Activated T-helper 1 cell treated with anti-CD3 and anti-CD28 coated beads, Interleukin-12 subunit alpha, Interleukin-12 subunit beta, Interleukin-2, Interleukin-4 antibody, amounts not matched to agents 30 ng/mL and 10 ng/mL and 1 ng/mL, durations not matched to agents 14 hours and 24 hours and 36 hours (primary cell): ENCODE measurements at regions of chr17 and their contacts with region 1.

Region 1: GRCh38 chr17:17151962-17152361 is 54.2 kb downstream of the PLD6 start:
- DNase-seq: no peak
- H3K4me3 Mint-ChIP-seq: no peak overlapping the region
- H3K27ac Mint-ChIP-seq: peak overlapping the region; percentile 68
- H3K4me1 Mint-ChIP-seq: peaks cover 56% of the 10 kb centered on the region
- H3K27me3 Mint-ChIP-seq: no peaks in the 10 kb centered on the region

Region 2: GRCh38 chr17:17119533-17119932 is 32.4 kb before region 1 on chr17:
- intact Hi-C with region 1: loop called (anchors 1 kb)
- DNase-seq: peak; percentile 50
- H3K4me3 Mint-ChIP-seq: peak overlapping the region; percentile 39
- H3K27ac Mint-ChIP-seq: peak overlapping the region; percentile 92
- H3K4me1 Mint-ChIP-seq: peaks cover 76% of the 10 kb centered on the region
- H3K27me3 Mint-ChIP-seq: no peaks in the 10 kb centered on the region

Region 3: DNA sequence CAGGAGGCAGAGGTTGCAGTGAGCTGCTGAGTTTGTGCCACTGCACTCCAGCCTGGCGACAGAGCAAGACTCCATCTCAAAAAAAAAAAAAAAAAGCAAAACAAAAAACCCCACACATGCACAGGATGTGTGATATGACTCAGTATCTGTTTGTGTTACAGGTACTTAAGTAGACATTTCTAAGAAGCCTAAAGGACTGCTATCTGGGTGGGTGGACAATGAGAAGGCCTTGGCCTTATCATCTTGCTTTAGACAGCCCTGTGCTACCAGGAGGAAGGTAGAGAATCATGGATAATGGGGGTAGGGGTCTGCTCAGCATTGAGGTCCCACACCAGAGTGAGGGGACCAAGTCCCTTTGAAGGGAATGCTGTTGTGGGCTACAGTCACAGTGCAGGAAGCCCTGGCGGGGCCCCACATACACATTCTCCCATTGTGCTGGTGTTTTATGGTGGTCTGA is 27.4 kb after region 1 on chr17:
- intact Hi-C with region 1: loop called (anchors 1 kb)
- DNase-seq: peak; percentile 39
- H3K4me3 Mint-ChIP-seq: peak overlapping the region; percentile 84
- H3K27ac Mint-ChIP-seq: peak overlapping the region; percentile 97
- H3K4me1 Mint-ChIP-seq: peaks cover 76% of the 10 kb centered on the region
- H3K27me3 Mint-ChIP-seq: no peaks in the 10 kb centered on the region

Region 4: DNA sequence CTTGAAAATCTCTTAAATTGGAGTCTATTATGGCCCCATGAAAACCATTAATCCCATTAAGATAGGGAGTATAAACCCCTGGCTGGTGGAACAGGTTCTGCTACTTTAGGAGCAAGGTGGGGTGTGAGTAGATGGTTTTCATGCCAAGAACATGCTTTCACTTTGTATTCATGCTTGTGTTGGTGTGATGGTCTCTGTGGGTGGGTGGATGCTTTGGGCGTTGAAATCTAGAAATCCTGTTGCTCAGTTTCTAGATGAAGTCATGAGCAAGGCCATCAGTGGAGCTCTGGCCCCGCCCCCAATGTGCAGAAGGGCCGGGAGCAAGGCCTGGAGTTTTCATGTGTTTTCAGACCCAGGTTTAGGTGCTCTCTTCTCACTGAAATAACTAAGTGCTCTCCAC is 34.1 kb after region 1 on chr17:
- intact Hi-C with region 1: loop called (anchors 1 kb)
- DNase-seq: peak; percentile 55
- H3K4me3 Mint-ChIP-seq: peak overlapping the region; percentile 78
- H3K27ac Mint-ChIP-seq: peak overlapping the region; percentile 88
- H3K4me1 Mint-ChIP-seq: peaks cover 57% of the 10 kb centered on the region
- H3K27me3 Mint-ChIP-seq: no peaks in the 10 kb centered on the region